Gastrocnemius medialis (tissue), 4 donors: ENCODE measurements at regions of chr2 and their contacts with region 1.

Region 1: DNA sequence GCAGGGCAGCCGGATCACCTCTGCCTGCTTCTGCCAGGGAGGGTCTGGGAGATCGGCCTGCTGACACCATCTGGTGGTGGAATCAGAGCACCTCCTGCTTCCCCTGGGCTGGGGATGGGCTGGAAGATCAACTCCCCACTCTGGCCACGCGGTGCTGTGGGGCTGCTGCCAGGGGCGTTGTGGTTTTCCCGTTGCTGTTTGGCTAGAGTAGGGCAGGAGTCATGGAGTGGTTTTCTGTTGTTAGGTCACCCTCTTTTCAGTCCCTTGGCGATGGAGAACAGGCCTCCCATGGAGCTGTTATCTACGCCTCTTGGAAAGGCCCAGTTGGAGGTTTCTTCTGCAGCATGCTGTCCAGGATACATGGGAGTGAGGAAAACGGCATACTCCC is 15.2 kb downstream of the BCL2L11 start:
- DNase-seq: peak; percentile 53 to 79
- ATAC-seq: peak; percentile 61 to 68
- H3K4me3 ChIP-seq: no peak overlapping the region
- H3K27ac ChIP-seq: peak overlapping the region; percentile 61 to 74 (median 62)
- H3K4me1 ChIP-seq: peaks cover 44 to 67% of the 10 kb centered on the region in 2 donors
- H3K27me3 ChIP-seq: no peaks in the 10 kb centered on the region
- CTCF ChIP-seq: peak; percentile 45 to 70 (median 63)
- POLR2A ChIP-seq: no peak

Region 2: GRCh38 chr2:110812726-110813645 is 322.9 kb before region 1 on chr2:
- in situ Hi-C with region 1: loop called in 1 of 4 experiments (anchors 10 kb)
- intact Hi-C with region 1: loop called (anchors 1 kb)
- DNase-seq: peak in 1 of 2 donors; percentile 52
- ATAC-seq: peak in 1 of 2 donors; percentile 9
- H3K4me3 ChIP-seq: no peak overlapping the region
- H3K27ac ChIP-seq: peak overlapping the region; percentile 81 to 97 (median 90)
- H3K4me1 ChIP-seq: peaks cover 44 to 61% of the 10 kb centered on the region in 2 donors
- H3K27me3 ChIP-seq: no peaks in the 10 kb centered on the region
- CTCF ChIP-seq: no peak
- POLR2A ChIP-seq: no peak

Region 3: GRCh38 chr2:110818767-110819481 is 317.0 kb before region 1 on chr2:
- in situ Hi-C with region 1: loop called in 1 of 4 experiments (anchors 10 kb)
- intact Hi-C with region 1: no loop called
- DNase-seq: no peak
- ATAC-seq: no peak
- H3K4me3 ChIP-seq: no peak overlapping the region
- H3K27ac ChIP-seq: peak overlapping the region in 2 of 4 donors; percentile 55 to 97
- H3K4me1 ChIP-seq: peaks cover 38 to 45% of the 10 kb centered on the region in 2 donors
- H3K27me3 ChIP-seq: no peaks in the 10 kb centered on the region
- CTCF ChIP-seq: no peak
- POLR2A ChIP-seq: no peak